A673 (cell line): ENCODE measurements at regions of chr2 and their contacts with region 1.

Region 1: GRCh38 chr2:132815522-132815921 is 145.5 kb upstream of the LYPD1 start:
- DNase-seq: peak; percentile 53
- H3K4me3 ChIP-seq: no peak overlapping the region
- H3K27ac ChIP-seq: no peak overlapping the region
- H3K4me1 ChIP-seq: peaks cover 50% of the 10 kb centered on the region
- H3K27me3 ChIP-seq: no peaks in the 10 kb centered on the region
- CTCF ChIP-seq: no peak

Region 2: DNA sequence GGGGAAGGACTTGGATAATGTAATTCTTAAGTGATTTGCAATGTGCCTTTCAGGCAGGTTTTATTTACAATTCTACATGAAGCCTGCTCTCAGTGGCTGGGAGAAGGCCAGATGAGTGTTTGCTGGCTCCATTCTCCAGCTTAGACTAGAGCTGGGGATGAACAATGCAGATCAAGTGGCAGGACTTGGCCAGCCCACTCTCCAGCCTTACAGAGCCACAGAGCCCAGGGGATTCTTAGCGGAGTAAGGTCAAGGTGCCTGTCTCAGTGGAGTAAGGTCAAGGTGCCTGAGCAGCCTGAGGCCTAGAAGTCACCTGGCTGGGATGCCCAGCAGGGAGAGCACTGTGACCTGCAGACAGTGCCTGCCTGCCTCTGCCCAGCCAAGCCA is 233.2 kb before region 1 on chr2:
- CTCF ChIA-PET with region 1: no interaction called
- POLR2A ChIA-PET with region 1: no interaction called
- intact Hi-C with region 1: no loop called
- DNase-seq: no peak
- H3K4me3 ChIP-seq: no peak overlapping the region
- H3K27ac ChIP-seq: no peak overlapping the region
- H3K4me1 ChIP-seq: no peaks in the 10 kb centered on the region
- H3K27me3 ChIP-seq: peaks cover 10% of the 10 kb centered on the region
- CTCF ChIP-seq: no peak

Region 3: GRCh38 chr2:133063775-133064174 is 248.3 kb after region 1 on chr2:
- CTCF ChIA-PET with region 1: no interaction called
- POLR2A ChIA-PET with region 1: no interaction called
- intact Hi-C with region 1: loop called (anchors 5 kb)
- DNase-seq: peak; percentile 73
- H3K4me3 ChIP-seq: no peak overlapping the region
- H3K27ac ChIP-seq: no peak overlapping the region
- H3K4me1 ChIP-seq: peaks cover 16% of the 10 kb centered on the region
- H3K27me3 ChIP-seq: no peaks in the 10 kb centered on the region
- CTCF ChIP-seq: no peak